ENCODE measurements at regions of chr3 and their contacts with region 1.

Region 1: DNA sequence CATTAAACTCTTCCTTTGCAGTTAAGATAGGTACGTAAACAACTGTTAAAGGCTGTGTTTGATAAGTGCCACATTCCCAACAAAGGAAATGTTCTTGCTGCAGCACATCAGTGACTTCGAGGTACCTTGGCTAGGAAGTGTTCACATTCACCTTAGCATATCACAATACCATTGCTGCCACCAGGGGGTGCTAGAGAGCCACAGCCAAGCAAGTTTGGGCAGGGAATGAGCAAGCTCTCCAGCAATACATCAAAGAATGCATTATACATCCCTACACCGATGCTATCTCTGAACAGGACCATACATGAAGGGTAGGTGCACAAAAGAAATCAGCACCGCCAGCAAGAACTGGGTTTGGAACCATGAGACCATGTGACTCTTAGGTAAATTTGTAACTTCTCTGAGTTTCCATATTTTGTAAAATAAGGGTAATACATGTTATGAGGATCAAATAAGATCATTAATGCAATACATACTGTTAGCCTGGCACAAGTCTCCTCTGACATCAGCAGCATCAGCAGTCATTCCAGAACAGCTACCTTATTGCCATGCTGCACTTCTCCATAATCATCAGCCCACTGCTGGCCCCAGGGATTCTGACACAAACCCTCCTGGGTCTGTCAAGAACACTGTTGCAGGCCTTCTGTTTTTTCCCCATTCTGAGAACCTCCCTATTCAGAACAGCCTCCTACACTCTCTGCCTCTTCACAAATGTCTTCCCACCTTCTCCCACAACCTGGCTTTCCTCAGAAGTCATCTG is 37.6 kb downstream of the RYK start:
- DNase-seq: peak; percentile 71
- CTCF ChIP-seq: peak; percentile 93

Region 2: DNA sequence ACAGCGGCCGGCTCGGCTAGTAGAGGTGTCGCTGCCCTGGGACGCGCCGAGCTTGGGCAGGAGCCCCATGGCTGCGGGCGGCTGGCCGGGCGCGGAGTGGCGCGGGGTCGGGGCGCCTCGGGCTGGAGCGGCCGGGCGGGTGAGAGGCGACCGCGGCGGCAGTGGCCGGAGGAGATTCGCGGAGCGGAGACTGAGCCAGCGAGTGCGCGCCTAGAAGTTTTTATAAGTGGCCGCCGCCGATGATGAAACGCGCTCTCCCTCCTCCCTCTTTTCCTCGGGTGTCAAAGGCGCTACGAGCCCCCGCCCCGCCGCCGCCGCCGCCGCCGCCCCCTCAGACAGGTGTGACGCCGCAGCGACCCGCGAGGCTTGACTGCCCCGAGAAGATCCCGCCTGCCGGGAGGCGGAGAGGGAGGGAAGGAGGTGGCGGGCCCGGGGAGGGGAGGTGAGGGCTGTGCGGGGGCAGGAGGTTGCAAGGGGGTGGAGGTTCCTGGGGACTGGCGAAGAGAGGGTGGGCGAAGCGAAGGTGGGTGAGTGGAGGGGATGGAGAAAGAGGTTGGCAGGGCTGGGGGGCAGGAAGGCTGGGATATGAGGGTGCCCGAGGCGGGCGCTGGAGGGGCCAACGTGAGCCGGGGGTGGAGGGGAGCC is 183.2 kb before region 1 on chr3 and contains the start of gene SLCO2A1:
- CTCF ChIA-PET with region 1: no interaction called
- POLR2A ChIA-PET with region 1: no interaction called
- DNase-seq: no peak
- CTCF ChIP-seq: no peak

Region 3: GRCh38 chr3:134186391-134186790 is 26.7 kb before region 1 on chr3:
- CTCF ChIA-PET with region 1: interaction called, 10 read pairs
- POLR2A ChIA-PET with region 1: no interaction called
- DNase-seq: no peak
- CTCF ChIP-seq: no peak

Region 4: DNA sequence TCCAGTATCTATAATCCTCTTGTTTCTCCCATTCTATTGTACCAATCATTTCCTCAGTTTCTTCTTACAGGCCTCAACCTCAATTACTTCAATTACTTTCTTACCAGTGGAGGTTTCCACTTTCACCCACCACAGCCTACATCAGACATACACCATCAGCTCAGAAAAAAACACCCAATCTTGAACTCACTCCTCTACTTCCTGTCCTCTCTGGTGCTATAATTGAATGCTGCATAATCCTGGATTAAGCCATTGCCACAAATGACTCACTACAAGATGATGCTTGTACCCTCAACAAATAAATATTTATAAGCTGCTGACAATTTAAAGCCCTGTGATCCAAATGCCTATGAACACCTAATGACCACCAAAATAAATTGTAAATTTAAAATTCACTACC is 19.1 kb after region 1 on chr3:
- CTCF ChIA-PET with region 1: interaction called, 123 read pairs
- POLR2A ChIA-PET with region 1: no interaction called
- DNase-seq: no peak
- CTCF ChIP-seq: no peak

Region 5: DNA sequence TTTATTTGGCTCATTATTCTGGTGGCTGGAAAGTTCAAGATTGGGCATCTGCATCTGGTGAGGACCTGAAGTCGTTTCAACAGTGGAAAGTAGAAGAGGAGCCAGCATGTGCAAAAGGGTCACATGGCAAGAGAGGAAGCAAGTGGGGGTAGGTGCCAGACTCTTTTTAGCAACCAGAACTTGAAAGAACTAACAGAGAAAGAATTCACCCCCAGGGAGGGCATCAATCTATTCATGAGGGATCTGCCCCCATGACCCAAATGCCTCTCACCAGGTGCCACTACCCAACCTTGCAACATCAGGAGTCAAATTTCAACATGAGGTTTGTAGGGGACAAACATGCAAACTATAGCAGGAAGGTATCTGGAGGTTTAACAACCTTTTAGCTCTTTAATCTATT is 47.9 kb after region 1 on chr3:
- CTCF ChIA-PET with region 1: interaction called, 13 read pairs
- POLR2A ChIA-PET with region 1: no interaction called
- DNase-seq: no peak
- CTCF ChIP-seq: no peak

Region 6: GRCh38 chr3:134308350-134308891 is 95.3 kb after region 1 on chr3:
- CTCF ChIA-PET with region 1: interaction called, 16 read pairs
- POLR2A ChIA-PET with region 1: no interaction called
- DNase-seq: peak; percentile 75
- CTCF ChIP-seq: peak; percentile 97